ENCODE measurements at regions of chr16 and their contacts with region 1.

Region 1: DNA sequence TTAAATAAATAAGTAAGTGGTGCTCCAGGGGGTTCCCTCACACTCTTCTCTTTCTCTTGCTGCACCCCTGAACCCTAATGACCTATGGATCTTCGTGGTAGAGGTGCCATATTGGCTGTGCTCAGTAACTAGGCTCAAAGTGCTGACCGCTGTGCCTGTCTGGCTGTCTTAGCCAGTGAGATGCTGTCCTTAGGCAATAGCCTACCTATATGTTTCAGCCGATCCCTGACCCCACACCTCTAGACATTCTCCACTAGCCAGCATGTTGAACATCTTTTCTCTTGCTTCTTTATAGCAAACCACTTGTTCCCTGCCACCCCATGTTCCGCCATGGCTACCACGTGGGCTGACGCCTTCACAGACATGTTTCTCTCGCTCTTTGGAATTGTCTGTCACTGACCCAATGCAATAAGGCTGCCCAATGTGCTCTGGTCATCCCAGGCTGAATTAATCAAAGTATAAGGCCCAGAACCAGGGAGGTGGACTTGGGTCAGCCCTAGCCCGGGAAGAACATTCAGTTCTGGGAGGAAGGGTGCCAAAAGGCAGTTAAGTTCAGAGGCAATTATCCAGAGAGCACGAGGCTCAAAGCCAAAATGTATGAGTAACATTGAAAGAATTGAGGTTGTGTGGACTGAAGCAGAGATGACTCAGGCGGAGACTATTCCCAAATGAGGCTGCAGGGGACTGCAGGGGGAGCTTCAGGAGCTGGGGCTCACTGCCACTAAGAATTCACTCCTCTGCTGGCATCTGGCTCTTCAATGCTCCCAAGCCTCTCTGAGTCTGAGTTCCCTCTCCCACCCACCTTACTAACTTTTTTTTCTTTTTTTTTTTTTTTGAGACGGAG is 28.7 kb upstream of the TNRC6A start:
- DNase-seq: peak; percentile 94
- H3K4me3 ChIP-seq: no peak overlapping the region
- CTCF ChIP-seq: peak; percentile 55

Region 2: DNA sequence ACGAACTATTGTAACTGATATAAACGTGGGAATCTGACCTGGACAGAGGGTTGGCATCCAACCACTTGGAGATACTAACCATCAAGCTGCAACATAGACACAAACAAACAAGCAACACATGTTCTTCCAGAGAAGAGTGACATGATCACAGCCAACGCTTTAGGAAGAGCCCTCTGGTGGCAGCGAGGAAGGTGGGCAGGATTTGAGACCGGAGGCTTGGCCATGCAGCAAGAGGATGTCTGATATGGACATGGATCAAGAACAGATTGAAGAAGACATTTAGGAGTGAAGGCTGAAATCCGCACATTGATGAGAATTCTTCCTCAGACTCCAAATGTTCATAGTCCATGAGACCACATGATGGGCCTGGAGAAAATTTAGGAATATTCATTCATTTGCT is 11.6 kb before region 1 on chr16:
- CTCF ChIA-PET with region 1: interaction called, 31 read pairs
- POLR2A ChIA-PET with region 1: no interaction called
- DNase-seq: no peak
- H3K4me3 ChIP-seq: no peak overlapping the region
- CTCF ChIP-seq: peak; percentile 79